ENCODE measurements at regions of chr11 and their contacts with region 1.

Region 1: GRCh38 chr11:96342961-96343711 is at the start of gene MAML2:
- DNase-seq: peak; percentile 93
- H3K4me3 Mint-ChIP-seq: peak within 1 kb of the TSS; percentile 97
- H3K27ac Mint-ChIP-seq: peak within 1 kb of the TSS; percentile 88
- H3K4me1 Mint-ChIP-seq: peaks cover 28% of the 10 kb centered on the region
- H3K27me3 Mint-ChIP-seq: no peaks in the 10 kb centered on the region
- total RNA-seq, gene MAML2: 19.2 to 19.3 TPM

Region 2: DNA sequence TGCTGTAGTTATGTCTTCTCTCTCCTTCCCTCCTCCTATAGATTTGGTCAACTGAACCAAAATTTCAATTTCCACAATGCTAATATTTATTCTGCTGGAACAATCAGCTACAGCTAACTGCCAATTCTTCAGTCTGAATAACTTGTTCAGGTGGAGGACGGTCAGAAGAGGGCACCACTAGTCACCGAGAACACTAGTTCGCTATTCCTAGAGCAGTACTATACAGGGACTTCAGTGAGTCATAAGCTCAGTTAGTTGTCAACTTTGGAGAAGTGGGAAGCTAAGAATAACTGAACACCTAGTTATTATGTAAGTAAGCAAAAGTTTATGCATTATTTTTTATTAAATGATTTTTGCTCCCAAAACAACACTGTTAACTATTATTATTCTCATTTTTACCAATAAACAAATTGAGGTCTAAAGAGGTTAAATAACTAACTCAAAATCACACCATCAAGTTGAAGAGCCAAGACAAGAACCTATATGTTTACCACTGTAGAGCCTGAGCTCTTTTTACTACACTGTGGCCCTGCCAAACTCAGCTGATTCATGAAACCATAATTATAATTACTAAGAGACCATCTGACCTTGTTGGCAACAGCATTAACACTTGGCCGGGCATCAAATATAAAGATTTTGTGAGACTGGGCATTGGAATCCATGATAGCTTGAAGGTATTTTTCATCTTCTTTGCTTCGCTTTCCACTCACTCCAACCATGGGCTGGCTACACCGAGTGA is 493.9 kb before region 1 on chr11:
- CTCF ChIA-PET with region 1: interaction called, 23 read pairs
- POLR2A ChIA-PET with region 1: interaction called, 4 read pairs
- DNase-seq: peak; percentile 23
- H3K4me3 Mint-ChIP-seq: no peak overlapping the region
- H3K27ac Mint-ChIP-seq: no peak overlapping the region
- H3K4me1 Mint-ChIP-seq: no peaks in the 10 kb centered on the region
- H3K27me3 Mint-ChIP-seq: no peaks in the 10 kb centered on the region

Region 3: DNA sequence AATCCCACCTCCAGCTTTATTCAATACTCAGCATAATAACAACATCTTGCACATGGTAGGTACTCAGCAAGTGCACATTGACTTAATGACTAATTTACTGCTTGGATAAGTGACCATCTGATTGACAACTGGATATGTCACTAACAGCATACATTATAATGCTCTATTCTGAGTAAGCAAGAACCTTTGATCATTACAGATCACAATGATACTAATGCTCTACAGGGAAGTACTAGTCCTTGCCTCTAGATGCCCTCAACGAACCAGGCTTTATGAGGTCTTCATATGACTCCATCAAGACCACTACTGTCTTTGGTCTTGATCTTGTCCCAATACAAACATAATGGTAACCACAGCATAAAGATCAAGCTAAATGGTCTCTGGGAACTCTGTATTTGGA is 251.7 kb before region 1 on chr11:
- CTCF ChIA-PET with region 1: interaction called, 56 read pairs
- POLR2A ChIA-PET with region 1: interaction called, 11 read pairs
- DNase-seq: no peak
- H3K4me3 Mint-ChIP-seq: no peak overlapping the region
- H3K27ac Mint-ChIP-seq: no peak overlapping the region
- H3K4me1 Mint-ChIP-seq: peaks cover 19% of the 10 kb centered on the region
- H3K27me3 Mint-ChIP-seq: no peaks in the 10 kb centered on the region

Region 4: DNA sequence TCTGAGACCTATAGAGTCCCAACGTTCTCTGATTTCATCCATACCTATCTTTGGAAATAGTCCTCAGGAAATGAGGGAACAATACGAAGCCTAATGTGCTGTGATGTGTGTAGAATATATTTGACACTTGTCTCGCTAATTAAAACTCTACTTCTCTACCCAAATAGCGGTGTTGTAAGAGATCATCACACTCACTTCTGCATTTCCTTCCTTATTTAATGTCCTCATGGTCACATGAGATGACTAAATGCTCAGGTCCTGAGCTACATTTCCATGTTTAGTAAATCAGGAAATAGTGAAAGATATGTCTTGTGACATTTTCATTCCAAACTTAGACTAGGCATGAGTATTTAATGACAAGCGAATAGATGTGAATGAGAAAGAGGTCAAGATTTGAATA is 112.5 kb before region 1 on chr11:
- CTCF ChIA-PET with region 1: interaction called, 146 read pairs
- POLR2A ChIA-PET with region 1: interaction called, 52 read pairs
- DNase-seq: no peak
- H3K4me3 Mint-ChIP-seq: no peak overlapping the region
- H3K27ac Mint-ChIP-seq: no peak overlapping the region
- H3K4me1 Mint-ChIP-seq: peaks cover 25% of the 10 kb centered on the region
- H3K27me3 Mint-ChIP-seq: no peaks in the 10 kb centered on the region

Region 5: DNA sequence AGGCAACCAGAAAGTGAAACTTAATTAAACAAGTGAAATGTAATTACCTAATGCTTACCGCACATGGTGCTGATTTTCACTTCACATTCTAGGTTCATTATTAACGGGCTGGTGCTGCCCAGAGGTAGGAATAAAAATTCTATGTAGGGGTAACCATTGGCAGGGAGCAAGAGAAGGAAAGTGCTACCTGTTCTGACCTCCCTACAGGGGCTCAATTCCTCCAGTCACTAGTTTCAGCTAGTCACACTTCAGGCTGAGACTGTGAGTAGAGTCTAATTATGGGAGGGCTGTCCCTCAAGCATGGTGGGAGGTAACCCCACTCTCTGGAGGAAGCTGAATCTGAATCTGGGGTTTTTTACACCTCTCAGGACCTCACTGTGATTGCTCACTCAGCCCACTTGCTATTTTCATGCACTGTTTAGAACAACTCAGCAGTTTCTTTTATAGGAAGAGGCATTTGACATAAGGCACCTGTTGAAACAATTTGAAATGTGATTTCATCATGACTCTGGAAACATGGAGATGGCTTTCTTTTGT is 75.6 kb before region 1 on chr11:
- CTCF ChIA-PET with region 1: interaction called, 16 read pairs
- POLR2A ChIA-PET with region 1: interaction called, 13 read pairs
- DNase-seq: peak; percentile 34
- H3K4me3 Mint-ChIP-seq: peak overlapping the region; percentile 46
- H3K27ac Mint-ChIP-seq: peak overlapping the region; percentile 76
- H3K4me1 Mint-ChIP-seq: peaks cover 61% of the 10 kb centered on the region
- H3K27me3 Mint-ChIP-seq: no peaks in the 10 kb centered on the region

Region 6: GRCh38 chr11:96314326-96315020 is 28.7 kb before region 1 on chr11:
- CTCF ChIA-PET with region 1: interaction called, 24 read pairs
- POLR2A ChIA-PET with region 1: interaction called, 8 read pairs
- DNase-seq: peak; percentile 22
- H3K4me3 Mint-ChIP-seq: peak overlapping the region; percentile 1
- H3K27ac Mint-ChIP-seq: peak overlapping the region; percentile 83
- H3K4me1 Mint-ChIP-seq: peaks cover 73% of the 10 kb centered on the region
- H3K27me3 Mint-ChIP-seq: no peaks in the 10 kb centered on the region

Measured in activated CD4-positive, alpha-beta memory T cell treated with anti-CD3 and anti-CD28 coated beads, Interleukin-2, amount 10 ng/mL, durations not matched to agents 7 days and 5 days (primary cell).